Ascending aorta (tissue), 2 donors: ENCODE measurements at regions of chr7 and their contacts with region 1.

Region 1: DNA sequence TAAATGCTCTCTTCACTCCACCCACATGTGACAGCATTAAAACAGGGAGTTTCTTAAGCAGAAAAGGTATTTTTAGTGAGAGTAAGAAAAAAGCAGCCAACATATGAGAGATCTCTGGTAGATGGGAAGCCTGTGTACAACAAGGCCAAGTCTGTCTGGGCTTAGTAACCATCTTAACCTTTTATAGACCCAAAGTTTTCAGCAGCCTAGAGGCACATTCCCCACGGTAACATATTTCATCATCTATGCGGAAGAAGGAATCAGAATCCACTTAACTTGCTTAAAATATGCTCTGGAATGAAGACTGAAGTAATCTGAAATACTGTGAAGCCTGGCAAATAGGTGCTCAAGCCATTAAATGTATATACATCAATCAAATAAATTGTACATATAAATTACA is 127.8 kb downstream of the RAPGEF5 start:
- DNase-seq: no peak
- H3K4me3 ChIP-seq: no peak overlapping the region
- H3K27ac ChIP-seq: peak overlapping the region in 1 of 2 donors; percentile 53
- H3K4me1 ChIP-seq: peaks cover 0 to 10% of the 10 kb centered on the region in 2 donors
- H3K27me3 ChIP-seq: no peaks in the 10 kb centered on the region
- CTCF ChIP-seq: no peak

Region 2: GRCh38 chr7:22193450-22193983 is 35.6 kb before region 1 on chr7:
- intact Hi-C with region 1: loop called (anchors 5 kb)
- DNase-seq: peak in 1 of 2 donors; percentile 69
- H3K4me3 ChIP-seq: peak overlapping the region; percentile 53 to 62
- H3K27ac ChIP-seq: peak overlapping the region in 1 of 2 donors; percentile 58
- H3K4me1 ChIP-seq: peaks cover 0 to 8% of the 10 kb centered on the region in 2 donors
- H3K27me3 ChIP-seq: no peaks in the 10 kb centered on the region
- CTCF ChIP-seq: no peak

Region 3: GRCh38 chr7:22262538-22262937 is 33.4 kb after region 1 on chr7:
- intact Hi-C with region 1: no loop called
- DNase-seq: no peak
- H3K4me3 ChIP-seq: no peak overlapping the region
- H3K27ac ChIP-seq: no peak overlapping the region
- H3K4me1 ChIP-seq: no peaks in the 10 kb centered on the region
- H3K27me3 ChIP-seq: no peaks in the 10 kb centered on the region
- CTCF ChIP-seq: no peak